ENCODE measurements at regions of chr4 and their contacts with region 1.

Region 1: GRCh38 chr4:25439918-25440477 is 62.9 kb downstream of the ANAPC4 start:
- DNase-seq: peak; percentile 88
- H3K4me3 ChIP-seq: no peak overlapping the region
- H3K27ac ChIP-seq: peak overlapping the region; percentile 32
- H3K4me1 ChIP-seq: peaks cover 14% of the 10 kb centered on the region
- H3K27me3 ChIP-seq: no peaks in the 10 kb centered on the region
- CTCF ChIP-seq: peak; percentile 90

Region 2: DNA sequence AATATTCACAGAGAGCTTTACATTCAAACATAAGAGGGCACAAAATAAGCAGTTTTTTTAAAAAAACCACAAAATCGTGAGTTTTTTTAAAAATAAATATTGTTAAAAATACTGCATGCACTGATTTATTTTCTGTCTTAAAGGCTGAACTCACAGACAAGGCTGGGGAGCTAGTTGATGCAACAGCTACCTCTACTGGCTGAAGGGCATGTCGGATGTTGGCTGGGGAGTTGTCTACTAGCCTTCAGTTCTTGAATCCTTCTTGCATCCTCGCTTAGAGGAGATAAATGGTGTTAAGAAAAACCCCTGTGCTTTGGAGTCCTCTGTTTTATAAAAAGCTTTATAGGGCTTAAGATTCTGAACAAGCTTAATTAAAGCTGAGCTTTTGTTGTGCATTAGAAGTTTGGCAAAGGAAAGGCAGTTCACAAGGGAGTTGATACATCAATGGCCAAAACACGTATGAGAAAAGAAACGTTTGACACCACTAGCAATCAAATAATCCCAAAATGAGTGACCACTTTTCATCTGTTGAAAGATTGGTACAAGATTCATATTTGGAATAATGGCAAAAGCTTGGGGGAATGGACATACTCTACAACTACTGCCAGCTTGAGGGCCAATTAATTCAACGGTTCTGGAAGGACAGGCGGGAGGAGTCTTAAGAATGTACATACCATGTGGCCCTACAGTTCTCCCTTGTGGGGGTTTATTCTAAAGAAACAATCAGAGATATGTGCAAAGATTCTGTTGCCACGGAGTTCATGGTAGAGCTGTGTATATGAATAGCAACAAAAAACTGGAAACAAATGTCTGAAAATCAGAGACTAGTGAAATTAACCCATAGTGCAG is 328.1 kb after region 1 on chr4:
- CTCF ChIA-PET with region 1: interaction called, 23 read pairs
- POLR2A ChIA-PET with region 1: no interaction called
- intact Hi-C with region 1: loop called (anchors 1 kb)
- DNase-seq: peak; percentile 81
- H3K4me3 ChIP-seq: no peak overlapping the region
- H3K27ac ChIP-seq: peak overlapping the region; percentile 57
- H3K4me1 ChIP-seq: peaks cover 2% of the 10 kb centered on the region
- H3K27me3 ChIP-seq: no peaks in the 10 kb centered on the region
- CTCF ChIP-seq: peak; percentile 89

Region 3: DNA sequence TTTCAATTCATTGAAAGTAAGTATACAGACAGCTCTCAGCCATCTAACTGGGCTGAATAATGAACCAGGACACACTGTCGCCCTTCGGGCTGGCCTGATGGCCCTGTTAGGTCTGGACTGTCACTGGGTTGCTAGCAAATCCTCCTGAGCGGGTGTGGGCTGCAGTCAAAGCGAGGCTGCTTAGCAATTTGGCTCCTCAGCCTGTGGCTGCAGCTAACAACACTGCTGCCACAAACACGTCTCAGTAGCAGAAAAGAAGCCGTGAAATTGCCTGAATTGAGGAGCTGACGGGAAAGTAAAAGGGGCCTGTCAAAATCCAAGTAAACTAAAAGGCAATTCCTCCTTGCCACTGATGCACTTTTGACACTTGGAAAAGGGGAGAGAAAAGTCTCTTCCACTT is 546.8 kb after region 1 on chr4:
- CTCF ChIA-PET with region 1: no interaction called
- POLR2A ChIA-PET with region 1: no interaction called
- intact Hi-C with region 1: loop called (anchors 5 kb)
- DNase-seq: no peak
- H3K4me3 ChIP-seq: no peak overlapping the region
- H3K27ac ChIP-seq: no peak overlapping the region
- H3K4me1 ChIP-seq: peaks cover 3% of the 10 kb centered on the region
- H3K27me3 ChIP-seq: no peaks in the 10 kb centered on the region
- CTCF ChIP-seq: no peak

Measured in A673 (cell line).